BJ (cell line): ENCODE measurements at regions of chr9 and their contacts with region 1.

Region 1: GRCh38 chr9:108599571-108599970 is 256.2 kb downstream of the ACTL7B start:
- DNase-seq: no peak
- H3K4me3 ChIP-seq: no peak overlapping the region
- H3K27me3 ChIP-seq: no peaks in the 10 kb centered on the region; the same call in 1 of the 2 replicates
- CTCF ChIP-seq: no peak

Region 2: DNA sequence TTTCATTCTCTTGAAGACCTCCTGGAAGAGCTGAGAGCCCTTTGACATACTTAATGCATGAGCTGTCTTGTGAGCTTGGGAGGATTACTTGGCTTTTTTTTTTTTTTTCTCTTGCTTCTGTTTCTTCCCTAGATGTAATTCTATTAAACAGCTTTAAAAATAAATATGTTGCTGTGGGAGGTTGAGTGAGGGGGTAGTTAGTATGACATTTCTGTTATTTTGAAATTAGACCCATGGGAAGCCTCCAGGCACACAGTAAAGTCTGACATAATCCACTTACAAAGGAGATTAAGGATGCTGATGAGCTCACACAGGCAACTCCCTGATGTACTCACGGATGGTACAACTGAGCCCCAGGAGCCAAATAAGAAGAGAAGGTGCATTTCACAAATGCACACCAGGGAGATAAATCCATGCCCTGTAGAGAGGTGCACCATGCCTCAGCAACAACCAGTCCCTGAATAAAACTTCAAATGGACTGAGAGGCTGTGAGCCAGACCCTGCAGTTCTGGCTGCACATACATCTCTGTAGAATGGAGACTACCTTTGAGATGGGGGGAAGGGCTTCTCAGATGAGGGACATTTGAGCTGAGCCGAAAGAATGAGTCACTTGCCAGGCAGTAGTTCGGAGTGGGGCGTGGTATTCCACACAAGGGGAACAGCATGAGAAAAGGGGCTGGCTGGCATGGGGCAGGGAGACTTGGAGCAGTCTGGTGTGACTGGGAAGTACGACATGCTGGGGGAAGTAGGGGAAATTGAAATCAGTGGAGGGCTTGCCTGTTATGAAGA is 187.5 kb after region 1 on chr9:
- CTCF ChIA-PET with region 1: no interaction called
- POLR2A ChIA-PET with region 1: no interaction called
- DNase-seq: peak; percentile 25
- H3K4me3 ChIP-seq: no peak overlapping the region
- H3K27me3 ChIP-seq: no peaks in the 10 kb centered on the region
- CTCF ChIP-seq: no peak

Region 3: DNA sequence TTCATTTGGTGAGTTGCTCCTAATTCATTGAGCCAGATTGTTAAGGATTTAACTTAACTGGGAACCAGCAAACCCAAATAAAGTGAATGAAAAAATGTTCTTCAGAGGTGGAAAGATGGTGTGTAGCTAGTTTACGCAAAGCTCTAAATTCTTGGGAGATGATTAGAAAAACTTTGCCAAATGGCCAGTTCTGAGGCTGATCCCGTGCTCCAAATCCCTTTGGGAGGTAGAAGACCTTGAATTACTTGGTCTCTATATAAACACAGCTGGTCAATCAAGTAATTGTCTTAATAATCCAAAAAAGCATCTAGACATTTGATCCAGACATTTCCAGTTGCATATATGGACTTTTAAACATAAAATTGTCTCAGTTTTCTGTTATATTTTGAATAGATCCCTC is 244.8 kb after region 1 on chr9:
- CTCF ChIA-PET with region 1: no interaction called
- POLR2A ChIA-PET with region 1: interaction called, 10 read pairs
- DNase-seq: no peak
- H3K4me3 ChIP-seq: no peak overlapping the region
- H3K27me3 ChIP-seq: 0 out of 2 replicates have a peak, but pooled peaks cover 1% of the 10 kb centered on the region
- CTCF ChIP-seq: no peak